Vagina (tissue), 2 donors: ENCODE measurements at regions of chr1 and their contacts with region 1.

Region 1: DNA sequence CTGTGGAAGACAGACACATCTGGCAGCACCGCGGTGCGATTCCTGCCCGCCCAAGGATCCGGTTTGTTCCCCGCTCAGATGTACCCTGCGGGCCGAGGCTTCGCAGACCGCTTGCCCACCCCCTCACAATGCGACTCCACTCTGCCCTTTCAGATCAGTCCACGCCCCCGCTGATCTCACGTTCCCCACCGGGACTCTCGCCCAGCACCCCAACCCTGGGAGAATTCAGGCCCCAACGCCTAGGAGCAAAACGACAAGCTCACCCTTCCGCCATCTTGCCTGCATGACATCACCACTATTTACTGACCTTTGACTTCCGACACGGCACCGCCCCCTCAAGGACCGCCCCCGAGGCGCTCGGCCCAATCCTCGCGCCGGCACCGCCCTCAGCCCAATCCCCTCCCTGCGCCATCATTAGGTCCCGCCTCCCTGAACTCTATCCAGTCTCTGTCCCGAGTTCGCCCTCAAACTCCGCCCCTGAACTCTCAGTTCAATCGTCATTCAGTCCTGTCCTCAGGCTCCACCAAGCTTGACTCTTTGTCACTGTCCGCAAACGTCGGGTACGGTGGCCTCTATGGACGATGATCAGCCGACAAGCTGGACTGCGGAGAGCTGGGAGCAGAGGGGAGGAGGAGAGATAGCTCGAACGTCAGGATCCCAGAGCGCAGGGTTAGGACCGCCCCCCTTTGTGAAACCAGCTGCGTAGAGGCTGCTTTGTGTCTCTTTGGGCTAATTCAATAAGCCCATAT is at the start of gene BSDC1:
- DNase-seq: peak; percentile 97 to 99
- H3K4me3 ChIP-seq: peak within 1 kb of the TSS; percentile 86 to 98
- H3K27ac ChIP-seq: peak within 1 kb of the TSS; percentile 91
- H3K4me1 ChIP-seq: peaks cover 51% of the 10 kb centered on the region
- H3K27me3 ChIP-seq: no peaks in the 10 kb centered on the region
- CTCF ChIP-seq: no peak
- POLR2A ChIP-seq: peak; percentile 27 to 86
- total RNA-seq, gene BSDC1: 54.3 TPM

Region 2: DNA sequence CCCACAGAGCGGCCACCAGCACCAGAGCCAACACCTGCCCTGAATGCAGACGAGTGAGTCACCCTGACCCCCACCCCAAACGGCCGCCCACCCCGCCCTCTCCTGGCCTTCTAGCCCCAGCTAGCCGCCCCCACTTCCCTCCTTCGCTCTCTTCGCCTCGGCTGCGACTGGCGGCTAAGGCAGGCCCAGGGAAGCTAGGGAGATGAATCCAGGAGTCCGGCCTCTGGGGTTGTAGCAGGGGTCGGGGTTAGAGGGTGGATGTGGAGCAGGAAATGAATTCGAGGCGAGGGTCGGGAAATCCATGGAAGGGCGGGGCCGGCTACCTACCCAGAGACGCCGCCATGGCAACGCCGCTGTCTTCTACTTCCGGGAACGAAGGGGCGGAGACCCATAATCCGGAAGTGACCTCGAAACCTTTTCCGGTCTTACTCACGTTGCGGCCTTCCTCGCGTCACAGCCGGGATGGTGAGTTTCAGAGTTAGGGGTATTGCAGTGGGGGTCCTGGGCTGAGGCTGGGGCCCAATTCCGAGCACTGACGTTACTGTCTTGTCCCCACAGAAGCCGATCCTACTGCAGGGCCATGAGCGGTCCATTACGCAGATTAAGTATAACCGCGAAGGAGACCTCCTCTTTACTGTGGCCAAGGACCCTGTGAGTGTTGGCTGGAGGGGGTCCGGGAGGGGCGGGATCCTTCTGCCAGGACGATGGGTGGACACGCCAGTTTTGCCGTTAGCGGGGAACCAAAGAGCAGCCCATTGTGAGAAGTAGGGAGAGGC is 172.1 kb before region 1 on chr1 and contains the starts of genes EIF3I and TMEM234:
- intact Hi-C with region 1: loop called (anchors 10 kb)
- DNase-seq: no peak
- H3K4me3 ChIP-seq: peak within 1 kb of the TSS; percentile 92 to 95
- H3K27ac ChIP-seq: peak within 1 kb of the TSS; percentile 87
- H3K4me1 ChIP-seq: peaks cover 28% of the 10 kb centered on the region
- H3K27me3 ChIP-seq: no peaks in the 10 kb centered on the region
- CTCF ChIP-seq: no peak
- POLR2A ChIP-seq: peak in 1 of 2 donors; percentile 71
- total RNA-seq, gene EIF3I: 164 TPM
- total RNA-seq, gene TMEM234: 8.3 TPM

Region 3: GRCh38 chr1:32273388-32274208 is 120.7 kb before region 1 on chr1:
- intact Hi-C with region 1: no loop called
- DNase-seq: no peak
- H3K4me3 ChIP-seq: no peak overlapping the region
- H3K27ac ChIP-seq: no peak overlapping the region
- H3K4me1 ChIP-seq: no peaks in the 10 kb centered on the region
- H3K27me3 ChIP-seq: no peaks in the 10 kb centered on the region
- CTCF ChIP-seq: no peak
- POLR2A ChIP-seq: no peak